Cardiac septum (tissue), 1 donor: ENCODE measurements at regions of chr2 and their contacts with region 1.

Region 1: GRCh38 chr2:120012771-120013596 is at the start of gene EPB41L5:
- DNase-seq: peak; percentile 95
- total RNA-seq, gene EPB41L5: 15.7 TPM

Region 2: GRCh38 chr2:119759451-119760236 is 253.3 kb before region 1 on chr2 and contains the start of gene PTPN4:
- intact Hi-C with region 1: loop called (anchors 5 kb)
- DNase-seq: peak; percentile 97
- total RNA-seq, gene PTPN4: 35.7 TPM

Region 3: DNA sequence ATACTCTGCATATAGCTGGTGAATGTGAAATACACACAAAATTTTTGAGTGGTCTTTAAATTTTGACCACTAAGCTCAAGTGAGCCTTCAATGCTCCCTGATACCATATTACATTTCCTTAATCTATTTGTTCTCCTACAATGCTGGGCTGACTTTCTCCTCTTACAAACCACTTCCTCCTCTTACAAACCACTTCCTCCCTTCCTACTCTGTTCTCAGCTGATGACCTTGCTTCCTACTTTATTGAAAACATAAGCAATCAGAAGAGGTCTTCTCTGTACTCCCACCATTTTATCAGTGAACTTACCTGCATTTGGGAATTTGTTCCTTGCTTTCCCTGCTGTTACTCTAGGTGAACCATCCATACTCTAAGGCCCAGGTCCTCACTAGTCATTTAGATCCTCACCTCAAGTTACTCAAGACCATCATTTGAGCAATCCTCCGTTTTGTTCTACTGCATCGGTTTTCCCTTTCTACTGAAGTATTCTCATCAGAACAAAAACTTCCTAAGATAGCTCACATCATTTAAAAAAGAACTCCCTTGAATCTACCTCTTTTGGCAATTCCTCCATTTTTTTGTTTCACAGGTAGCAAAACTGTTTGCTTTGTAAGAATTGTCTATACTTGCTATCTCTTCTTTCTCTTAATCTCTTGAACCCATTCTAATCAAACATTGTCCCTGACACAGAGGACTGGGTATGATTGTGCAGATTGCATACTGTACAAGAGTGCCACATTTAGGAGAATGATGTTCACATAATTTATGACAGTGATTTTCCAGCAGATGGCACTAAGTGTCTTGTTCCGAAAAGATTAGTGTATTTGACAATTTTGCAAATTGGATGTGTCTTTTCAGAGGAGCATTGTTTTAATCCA is 96.4 kb after region 1 on chr2:
- intact Hi-C with region 1: loop called (anchors 5 kb)
- DNase-seq: no peak